Activated CD4-positive, alpha-beta memory T cell treated with anti-CD3 and anti-CD28 coated beads, Interleukin-2, amount 10 ng/mL, durations not matched to agents 7 days and 5 days (primary cell): ENCODE measurements at regions of chr4 and their contacts with region 1.

Region 1: DNA sequence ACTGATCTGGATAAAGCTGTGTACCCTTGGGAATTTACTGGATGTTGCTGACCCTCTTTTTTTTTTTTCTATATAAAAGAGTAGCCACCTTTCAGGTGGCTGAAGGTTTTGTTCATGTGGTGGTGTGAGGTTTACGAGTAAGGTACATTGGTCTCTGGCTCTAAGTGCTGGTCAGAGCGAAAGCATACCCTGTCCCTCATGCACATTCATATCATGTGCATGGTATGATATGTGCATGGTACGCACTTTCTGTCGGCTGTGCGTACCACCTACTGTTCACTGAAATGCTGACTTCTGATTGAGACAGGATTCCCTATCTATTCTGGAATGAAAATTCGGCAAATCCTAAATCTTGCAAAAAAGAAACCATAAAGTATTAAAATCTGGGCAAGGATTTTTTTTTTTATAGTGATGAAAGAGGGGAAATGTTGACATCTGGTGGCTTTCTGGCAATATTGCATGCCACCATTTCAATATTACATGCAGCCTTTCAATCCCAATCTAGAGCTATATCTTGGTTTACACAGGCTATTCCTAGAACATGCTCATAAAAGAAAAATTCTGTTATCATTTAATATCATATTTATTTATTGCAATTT is 32.8 kb downstream of the FAM149A start:
- DNase-seq: no peak
- H3K4me3 Mint-ChIP-seq: no peak overlapping the region
- H3K27ac Mint-ChIP-seq: no peak overlapping the region
- H3K4me1 Mint-ChIP-seq: peaks cover 22% of the 10 kb centered on the region
- H3K27me3 Mint-ChIP-seq: peaks cover 11% of the 10 kb centered on the region

Region 2: DNA sequence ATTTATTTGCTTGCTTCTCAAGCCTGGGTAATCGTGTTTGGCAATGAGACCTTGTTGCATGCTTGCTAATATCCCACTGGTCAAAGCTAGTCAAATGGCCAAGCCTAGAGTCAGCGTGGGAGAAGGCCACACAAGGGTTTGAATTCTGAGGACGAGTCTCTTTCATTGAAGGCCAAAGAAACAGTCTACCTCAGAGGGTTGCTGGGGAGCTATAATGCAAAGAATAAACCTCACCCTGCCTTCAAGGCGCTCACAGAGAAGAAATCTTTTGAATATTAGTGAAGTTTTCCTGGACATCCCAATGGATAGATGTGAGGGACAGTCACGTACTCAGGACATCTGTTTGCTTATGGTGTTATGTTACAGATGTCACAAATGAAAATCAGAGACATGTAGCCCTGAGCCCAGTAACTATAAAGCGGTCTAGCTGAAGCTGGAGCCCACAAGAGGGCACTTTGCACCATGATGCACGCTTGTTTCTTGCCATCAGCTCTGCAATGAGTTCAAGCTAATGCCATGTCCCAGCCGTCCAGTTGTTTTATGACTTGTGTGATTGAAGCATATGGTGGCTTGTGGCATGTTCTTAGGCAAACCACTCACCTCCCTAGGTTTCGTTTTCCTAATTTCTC is 69.4 kb before region 1 on chr4:
- CTCF ChIA-PET with region 1: interaction called, 37 read pairs
- POLR2A ChIA-PET with region 1: no interaction called
- DNase-seq: peak; percentile 51
- H3K4me3 Mint-ChIP-seq: no peak overlapping the region
- H3K27ac Mint-ChIP-seq: no peak overlapping the region
- H3K4me1 Mint-ChIP-seq: peaks cover 15% of the 10 kb centered on the region
- H3K27me3 Mint-ChIP-seq: peaks cover 5% of the 10 kb centered on the region

Region 3: DNA sequence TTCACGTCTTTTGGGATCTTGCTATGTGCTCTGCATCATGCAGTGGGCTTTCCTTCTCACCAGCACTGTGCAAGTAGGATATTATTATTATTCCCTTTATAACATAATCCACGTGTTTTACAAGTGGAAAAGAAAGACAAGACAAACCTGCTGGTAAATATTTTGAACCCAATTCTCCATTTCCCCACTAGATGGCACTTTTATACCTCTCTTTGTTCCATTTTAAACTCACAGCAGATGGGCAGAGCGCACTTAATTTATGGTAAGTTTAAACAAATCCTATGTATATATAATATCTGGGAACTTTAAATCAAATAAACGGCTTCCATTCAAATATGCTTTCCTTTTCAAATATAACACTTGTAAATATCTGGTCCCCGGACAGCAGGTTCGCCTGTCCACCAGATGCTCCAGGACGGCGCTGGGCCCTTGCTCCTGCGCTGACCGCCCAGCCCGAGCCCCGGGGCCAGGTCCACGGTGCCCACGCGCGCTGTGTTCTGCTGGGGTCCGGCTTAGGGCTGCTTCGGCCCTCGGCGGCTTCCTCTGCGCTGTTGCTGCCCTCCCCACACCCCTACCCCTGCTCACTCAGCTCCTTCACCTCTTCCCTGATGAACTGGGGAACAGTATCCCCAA is 159.8 kb after region 1 on chr4:
- CTCF ChIA-PET with region 1: no interaction called
- POLR2A ChIA-PET with region 1: no interaction called
- DNase-seq: no peak
- H3K4me3 Mint-ChIP-seq: no peak overlapping the region
- H3K27ac Mint-ChIP-seq: no peak overlapping the region
- H3K4me1 Mint-ChIP-seq: no peaks in the 10 kb centered on the region
- H3K27me3 Mint-ChIP-seq: peaks cover 9% of the 10 kb centered on the region